ENCODE measurements at regions of chr19 and their contacts with region 1.

Region 1: DNA sequence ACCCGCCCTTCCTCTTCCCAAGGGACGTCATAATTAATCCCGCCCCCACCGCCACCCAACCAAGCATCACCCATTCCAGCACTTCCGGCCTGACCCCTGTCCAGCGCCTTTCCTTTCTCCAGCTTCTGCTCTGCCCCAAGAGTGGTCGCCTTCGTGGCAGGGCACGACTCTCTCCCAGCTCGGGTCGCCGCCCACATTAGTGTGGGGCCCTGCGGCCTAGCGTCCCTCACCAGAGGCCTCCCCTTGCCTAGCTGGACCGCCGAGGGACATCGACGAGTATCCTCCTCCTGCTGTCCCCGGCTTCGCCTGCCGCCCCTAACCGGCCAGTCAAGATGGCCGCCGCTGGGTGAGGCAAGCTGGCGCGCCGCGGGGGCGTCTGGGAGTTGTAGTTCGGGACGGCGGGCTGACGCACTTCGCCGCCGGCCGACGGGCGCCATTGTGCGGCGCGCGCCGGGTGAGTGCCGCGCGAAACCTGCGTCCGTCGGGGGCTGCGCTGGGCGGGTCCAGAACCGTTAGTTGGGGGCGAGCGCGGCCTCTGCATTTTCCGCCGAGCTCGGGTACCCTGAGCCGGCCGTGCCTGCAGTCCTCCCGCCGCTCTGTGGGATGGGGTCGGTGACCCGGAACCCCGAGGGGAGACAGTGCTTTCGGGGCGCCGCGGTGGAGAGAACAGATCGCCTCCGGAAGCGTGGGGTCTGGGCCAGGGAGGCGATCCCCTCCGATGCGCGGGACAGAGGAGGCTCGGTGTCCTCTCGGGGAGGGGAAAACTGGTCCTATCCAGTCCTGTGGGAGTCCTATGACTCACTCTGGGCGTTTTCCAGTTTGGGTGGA is at the start of gene ZNF274:
- DNase-seq: peak; percentile 95
- ATAC-seq: peak; percentile 92
- H3K4me3 Mint-ChIP-seq: peak within 1 kb of the TSS; percentile 91
- H3K27ac Mint-ChIP-seq: peak within 1 kb of the TSS; percentile 100
- H3K4me1 Mint-ChIP-seq: peaks cover 18% of the 10 kb centered on the region
- H3K27me3 Mint-ChIP-seq: no peaks in the 10 kb centered on the region
- total RNA-seq, gene ZNF274: 31.9 to 32.8 TPM

Region 2: DNA sequence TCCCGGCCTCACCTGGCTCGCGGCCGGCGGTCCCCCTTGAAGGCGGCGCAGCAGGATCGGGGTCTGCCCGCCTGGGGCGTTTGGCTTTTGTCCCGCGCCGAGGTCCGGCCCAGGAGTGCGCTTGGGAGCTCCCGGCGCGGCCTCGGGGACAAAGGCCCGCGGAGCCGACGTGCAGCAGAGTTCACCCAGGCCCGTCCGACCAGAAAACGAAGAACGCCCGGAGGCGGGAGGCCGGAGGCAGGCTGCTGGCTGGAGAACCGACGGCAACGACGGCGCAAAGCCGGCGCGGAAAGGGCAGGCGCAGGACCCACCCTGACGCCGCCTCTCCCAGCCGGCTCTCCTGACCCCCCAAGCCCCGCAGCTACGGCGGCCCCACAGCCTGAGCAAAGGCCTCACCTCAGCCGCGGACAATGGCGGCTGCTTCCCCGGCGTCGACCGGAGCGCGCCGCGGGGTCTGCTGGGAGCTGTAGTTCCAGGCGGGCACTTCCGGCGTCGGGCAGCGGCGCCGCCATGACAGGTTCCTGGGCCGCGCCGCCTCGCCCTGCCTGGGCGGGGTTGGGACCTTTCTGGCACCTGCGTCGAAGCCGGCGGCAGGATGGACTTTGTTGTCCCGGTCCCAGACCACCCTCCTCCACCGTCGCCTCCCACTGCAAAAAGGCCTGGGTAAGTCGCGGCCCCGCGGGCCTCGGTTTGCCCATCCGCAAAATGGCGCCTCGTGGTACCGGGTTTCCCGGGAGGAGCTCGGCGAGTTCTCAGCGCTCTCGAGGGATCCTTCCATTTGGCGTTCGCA is 180.6 kb before region 1 on chr19 and contains the start of gene ZNF606:
- CTCF ChIA-PET with region 1: no interaction called
- POLR2A ChIA-PET with region 1: interaction called, 11 read pairs
- DNase-seq: peak; percentile 88
- ATAC-seq: peak; percentile 97
- H3K4me3 Mint-ChIP-seq: peak within 1 kb of the TSS; percentile 81
- H3K27ac Mint-ChIP-seq: peak within 1 kb of the TSS; percentile 87
- H3K4me1 Mint-ChIP-seq: peaks cover 30% of the 10 kb centered on the region
- H3K27me3 Mint-ChIP-seq: no peaks in the 10 kb centered on the region
- total RNA-seq, gene ZNF606: 13.6 to 14.4 TPM